Upper lobe of right lung (tissue), 1 donor: ENCODE measurements at regions of chr18 and their contacts with region 1.

Region 1: DNA sequence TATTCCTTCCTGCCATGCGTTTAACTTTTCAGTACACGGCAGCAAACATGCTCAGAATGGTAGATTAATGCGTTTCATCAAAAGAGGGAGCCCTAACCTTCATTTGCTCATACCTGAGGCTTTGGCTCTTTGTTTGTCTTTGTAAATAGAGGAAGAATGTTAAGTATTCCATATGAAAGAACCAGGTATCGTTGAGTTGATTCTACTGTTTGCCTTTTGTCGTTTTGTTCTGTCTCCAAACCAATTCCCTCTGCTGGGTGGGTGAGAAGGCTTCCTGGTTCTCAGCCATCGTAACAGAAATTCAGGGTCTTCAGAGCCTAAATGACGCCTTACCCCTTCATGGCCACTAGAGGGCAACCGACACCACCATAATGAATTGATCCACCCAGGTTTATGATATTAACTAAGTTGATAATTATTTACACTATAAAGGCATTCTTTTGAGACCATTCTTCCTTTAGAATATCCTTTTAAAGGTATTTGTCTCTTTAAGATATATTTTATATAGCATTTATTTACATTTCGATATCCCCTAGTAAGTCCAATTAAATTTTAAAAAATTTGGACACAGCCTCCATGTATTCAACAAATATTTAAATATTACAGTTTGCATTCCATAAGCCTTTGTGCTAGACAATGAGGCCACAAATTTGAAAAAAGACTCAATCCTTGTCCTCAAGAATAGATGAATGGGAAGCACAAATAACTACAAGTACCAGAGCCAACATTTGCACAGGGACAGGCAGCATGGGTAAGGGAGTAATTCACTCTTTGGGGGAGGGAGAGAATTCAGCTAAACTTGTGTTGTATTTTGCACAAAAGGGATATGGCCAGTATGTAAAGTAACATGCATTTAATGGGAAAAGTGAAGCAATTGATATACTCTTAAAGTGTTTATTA is 48.1 kb downstream of the TIMM21 start:
- DNase-seq: no peak
- ATAC-seq: peak; percentile 81
- H3K4me3 ChIP-seq: peak overlapping the region; percentile 24
- H3K27ac ChIP-seq: peak overlapping the region; percentile 73
- H3K4me1 ChIP-seq: no peaks in the 10 kb centered on the region
- H3K27me3 ChIP-seq: peaks cover 5% of the 10 kb centered on the region
- CTCF ChIP-seq: peak; percentile 94

Region 2: DNA sequence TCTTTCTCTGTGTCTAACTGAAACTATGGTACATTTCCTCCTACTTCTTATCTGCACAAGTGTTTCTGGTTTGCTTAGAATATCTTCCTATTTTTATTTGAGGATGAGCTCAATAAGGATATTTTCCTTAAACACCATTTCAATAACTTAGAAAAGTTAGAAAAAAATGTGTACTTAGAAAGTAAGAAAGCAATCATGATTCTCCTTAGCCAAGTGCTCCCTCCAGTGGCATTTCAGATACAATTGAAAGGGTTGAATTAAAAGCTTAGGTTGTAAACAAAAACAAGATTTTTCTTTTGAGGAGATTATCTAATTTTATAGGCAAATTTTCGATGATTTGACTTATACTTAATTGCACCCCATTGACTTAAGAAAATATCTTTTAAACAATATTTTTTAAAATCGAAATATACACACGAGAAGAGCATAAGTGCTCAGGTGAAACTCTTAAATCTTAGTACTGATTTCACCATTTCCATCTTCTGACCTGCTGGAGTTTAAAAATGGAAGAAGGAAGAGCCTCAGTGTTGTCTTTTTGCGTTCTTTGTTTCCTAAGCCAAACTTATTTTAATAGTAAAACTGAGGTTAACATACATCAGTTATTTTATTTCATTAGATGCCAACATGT is 146.1 kb after region 1 on chr18:
- intact Hi-C with region 1: loop called (anchors 5 kb)
- DNase-seq: no peak
- ATAC-seq: peak; percentile 69
- H3K4me3 ChIP-seq: no peak overlapping the region
- H3K27ac ChIP-seq: no peak overlapping the region
- H3K4me1 ChIP-seq: no peaks in the 10 kb centered on the region
- H3K27me3 ChIP-seq: no peaks in the 10 kb centered on the region
- CTCF ChIP-seq: peak; percentile 73